Gastrocnemius medialis (tissue), 4 donors: ENCODE measurements at regions of chr12 and their contacts with region 1.

Region 1: DNA sequence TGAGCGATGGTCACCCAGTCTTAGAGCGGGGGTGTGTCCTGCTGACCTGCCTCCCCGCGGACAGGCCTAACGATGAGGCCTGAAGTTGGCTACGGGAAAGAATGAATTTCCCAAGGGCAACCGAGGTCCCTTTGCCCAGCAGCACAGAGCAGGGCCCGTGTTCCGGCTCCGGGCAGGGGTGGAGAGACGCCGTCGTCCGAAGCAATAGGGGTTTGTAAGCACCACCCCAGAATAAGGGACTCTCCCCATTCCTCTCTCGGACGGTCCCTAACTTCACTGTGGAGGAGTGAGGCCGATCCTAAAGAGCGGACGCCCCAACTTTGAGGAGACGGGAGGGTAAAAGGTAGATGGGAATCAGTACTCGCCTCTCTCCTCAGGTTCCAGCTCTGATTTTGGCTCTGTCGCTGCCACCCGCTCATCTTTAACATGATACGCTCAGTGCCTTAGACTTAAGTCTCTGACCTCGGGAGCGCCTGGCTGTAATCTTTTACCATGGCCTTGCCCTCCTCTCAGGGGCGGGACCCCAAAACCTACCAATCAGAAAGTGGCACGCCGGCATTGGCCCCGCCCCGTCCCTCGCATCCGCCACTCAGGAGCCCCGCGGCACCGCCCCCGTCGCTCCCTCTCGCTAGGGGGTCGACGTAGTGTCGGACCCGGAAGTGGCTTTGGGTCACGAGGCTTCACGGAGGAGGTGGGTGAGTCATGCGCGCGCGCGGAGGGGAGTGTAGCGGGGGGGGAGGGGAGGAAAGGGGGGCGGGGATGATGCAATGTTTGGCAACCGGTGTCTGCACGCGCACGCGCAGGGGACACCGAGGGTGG is at the start of gene DDIT3:
- DNase-seq: peak; percentile 99 to 100
- ATAC-seq: peak; percentile 59 to 70
- H3K4me3 ChIP-seq: peak within 1 kb of the TSS; percentile 79 to 87 (median 82)
- H3K27ac ChIP-seq: peak within 1 kb of the TSS; percentile 93 to 99 (median 96)
- H3K4me1 ChIP-seq: peaks cover 56 to 61% of the 10 kb centered on the region in 2 donors
- H3K27me3 ChIP-seq: no peaks in the 10 kb centered on the region
- CTCF ChIP-seq: no peak
- POLR2A ChIP-seq: peak; percentile 99
- total RNA-seq, gene DDIT3: 11.8 to 46.4 (median 17.1) TPM

Region 2: GRCh38 chr12:56338308-56339157 is 1181.7 kb before region 1 on chr12 and contains the start of gene IL23A:
- in situ Hi-C with region 1: no loop called
- intact Hi-C with region 1: no loop called
- DNase-seq: no peak
- ATAC-seq: no peak
- H3K4me3 ChIP-seq: no peak within 1 kb of the TSS
- H3K27ac ChIP-seq: no peak within 1 kb of the TSS
- H3K4me1 ChIP-seq: peaks cover 4 to 5% of the 10 kb centered on the region in 2 donors
- H3K27me3 ChIP-seq: no peaks in the 10 kb centered on the region
- CTCF ChIP-seq: no peak
- POLR2A ChIP-seq: no peak
- total RNA-seq, gene IL23A: not detected

Region 3: DNA sequence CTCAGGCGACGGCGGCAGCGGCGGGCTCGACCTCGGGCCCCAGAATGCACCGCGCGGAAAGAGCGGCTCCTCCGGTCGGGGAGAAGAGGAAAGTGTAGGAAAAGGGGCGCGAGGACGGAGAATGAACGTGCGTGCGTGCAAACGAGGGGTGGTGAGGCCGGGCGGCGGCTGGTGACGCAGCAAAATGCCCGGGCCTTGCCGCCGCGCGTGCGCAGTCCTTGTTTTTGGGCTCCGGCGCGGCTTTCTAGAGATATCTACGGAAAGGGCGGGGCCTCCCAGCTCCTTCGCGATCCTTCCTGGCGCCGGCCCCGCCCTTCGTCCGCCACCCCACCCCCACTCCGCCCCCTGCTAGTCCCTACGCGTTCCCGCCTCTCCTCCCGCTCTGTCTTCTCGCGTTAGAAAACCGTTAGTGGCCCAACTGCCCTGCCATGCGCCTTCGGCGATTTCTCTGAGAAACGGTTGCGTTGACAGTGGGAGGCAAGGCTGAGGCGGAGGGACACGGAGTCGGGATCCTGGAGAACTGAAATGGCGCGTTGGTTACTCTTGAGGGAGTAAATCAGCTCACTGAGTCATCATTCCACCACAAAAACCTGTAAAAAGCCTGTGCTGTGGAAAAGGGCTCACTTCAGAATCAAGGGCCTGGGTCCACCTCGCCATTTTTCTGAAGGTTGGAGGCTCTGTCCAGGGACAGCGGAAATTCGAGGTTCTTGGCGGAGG is 832.0 kb before region 1 on chr12 and contains the start of gene PTGES3:
- in situ Hi-C with region 1: no loop called
- intact Hi-C with region 1: loop called (anchors 5 kb)
- DNase-seq: peak; percentile 96 to 97
- ATAC-seq: peak; percentile 88 to 89
- H3K4me3 ChIP-seq: peak within 1 kb of the TSS; percentile 84 to 95 (median 90)
- H3K27ac ChIP-seq: peak within 1 kb of the TSS; percentile 97 to 99 (median 98)
- H3K4me1 ChIP-seq: peaks cover 33 to 41% of the 10 kb centered on the region in 2 donors
- H3K27me3 ChIP-seq: no peaks in the 10 kb centered on the region
- CTCF ChIP-seq: no peak
- POLR2A ChIP-seq: peak; percentile 96 to 97
- total RNA-seq, gene PTGES3: 57.2 to 81.4 (median 69.3) TPM

Region 4: DNA sequence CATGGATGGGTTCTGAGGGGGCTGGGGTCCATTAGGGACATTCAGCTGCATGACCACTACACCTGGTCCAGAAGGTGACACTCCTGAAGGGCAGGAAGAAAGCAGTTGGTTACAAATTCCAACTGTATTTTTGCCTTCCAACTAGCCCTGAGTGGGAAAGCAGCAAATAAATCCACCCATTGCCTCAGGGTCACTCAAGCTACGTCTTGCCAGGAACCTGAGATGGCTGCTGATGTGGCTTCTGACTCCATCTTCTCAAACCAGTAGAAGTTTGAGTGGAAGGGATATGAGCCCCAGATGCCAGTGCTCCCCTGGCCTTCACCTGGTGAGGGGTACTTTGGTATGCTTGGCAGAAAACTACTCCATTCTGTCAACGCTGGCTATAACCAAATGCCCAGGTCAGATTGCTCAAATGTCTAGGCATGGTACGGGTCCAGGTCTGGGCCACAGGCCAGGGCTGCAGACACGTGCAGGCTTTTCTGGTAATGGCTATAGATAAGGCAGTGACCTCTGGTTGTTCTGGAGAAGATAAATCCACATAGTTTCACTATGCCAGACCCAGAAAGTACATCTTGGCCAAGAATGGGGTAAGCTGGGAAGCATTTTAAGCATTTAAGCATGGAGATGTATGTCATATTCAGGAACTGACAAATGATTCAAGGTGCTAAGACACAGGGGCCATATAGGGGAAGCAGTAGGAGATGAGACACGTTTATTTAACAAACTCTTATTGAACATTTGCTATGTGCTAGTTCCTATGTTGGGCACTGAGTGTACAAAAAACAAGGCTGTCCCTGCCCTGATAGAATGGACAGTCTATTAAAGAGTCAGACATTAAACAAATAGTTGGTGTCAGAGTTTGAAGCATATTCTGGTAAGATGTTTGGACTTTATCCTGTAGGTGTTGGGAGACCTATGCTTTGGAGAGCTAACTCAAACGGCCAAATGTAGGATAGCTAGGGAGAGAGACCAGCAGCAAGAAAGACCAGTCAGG is 261.0 kb before region 1 on chr12:
- in situ Hi-C with region 1: no loop called
- intact Hi-C with region 1: loop called (anchors 5 kb)
- DNase-seq: peak in 1 of 2 donors; percentile 47
- ATAC-seq: no peak
- H3K4me3 ChIP-seq: no peak overlapping the region
- H3K27ac ChIP-seq: peak overlapping the region; percentile 82 to 85 (median 82)
- H3K4me1 ChIP-seq: peaks cover 59 to 71% of the 10 kb centered on the region in 2 donors
- H3K27me3 ChIP-seq: no peaks in the 10 kb centered on the region
- CTCF ChIP-seq: no peak
- POLR2A ChIP-seq: no peak

Region 5: DNA sequence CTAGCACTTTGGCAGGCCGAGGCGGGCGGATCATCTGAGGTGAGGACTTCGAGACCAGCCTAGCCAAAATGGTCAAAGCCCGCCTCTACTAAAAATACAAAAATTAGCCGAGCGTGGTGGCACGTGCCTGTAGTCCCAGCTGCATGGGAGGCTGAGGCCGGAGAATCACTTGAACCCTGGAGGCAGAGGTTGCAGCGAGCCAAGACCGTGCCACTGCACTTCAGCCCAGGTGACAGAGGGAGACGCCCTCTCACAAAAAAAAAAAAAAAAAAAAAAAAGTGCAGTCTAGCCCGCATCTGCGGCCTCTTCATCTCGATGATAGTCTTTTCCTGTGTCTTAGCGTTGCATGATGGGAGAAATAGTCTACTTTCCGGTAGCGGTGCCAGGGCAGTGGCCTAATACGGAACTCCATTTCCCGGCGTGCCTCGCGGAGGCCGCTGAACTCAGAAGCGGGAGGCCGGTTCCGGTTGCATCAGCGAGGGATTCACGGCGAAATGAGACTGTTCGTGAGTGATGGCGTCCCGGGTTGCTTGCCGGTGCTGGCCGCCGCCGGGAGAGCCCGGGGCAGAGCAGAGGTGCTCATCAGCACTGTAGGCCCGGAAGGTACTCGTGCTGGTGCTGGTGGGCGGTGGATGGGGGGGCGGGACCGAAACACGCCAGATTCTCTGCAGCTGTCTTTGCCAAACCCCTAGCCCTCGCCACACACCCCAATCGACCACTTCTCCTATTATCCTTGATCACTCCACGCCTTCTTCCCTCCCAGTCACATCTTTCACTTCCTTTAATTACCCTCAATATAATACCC is 32.5 kb before region 1 on chr12 and contains the start of gene MARS1:
- in situ Hi-C with region 1: no loop called
- intact Hi-C with region 1: loop called (anchors 1 kb)
- DNase-seq: peak; percentile 94 to 96
- ATAC-seq: peak; percentile 100
- H3K4me3 ChIP-seq: peak within 1 kb of the TSS; percentile 74 to 95 (median 76)
- H3K27ac ChIP-seq: peak within 1 kb of the TSS; percentile 83 to 86 (median 84)
- H3K4me1 ChIP-seq: peaks cover 10 to 13% of the 10 kb centered on the region in 2 donors
- H3K27me3 ChIP-seq: no peaks in the 10 kb centered on the region
- CTCF ChIP-seq: no peak
- POLR2A ChIP-seq: peak; percentile 47 to 73
- total RNA-seq, gene MARS1: 37.7 to 81.1 (median 42.0) TPM

Region 6: DNA sequence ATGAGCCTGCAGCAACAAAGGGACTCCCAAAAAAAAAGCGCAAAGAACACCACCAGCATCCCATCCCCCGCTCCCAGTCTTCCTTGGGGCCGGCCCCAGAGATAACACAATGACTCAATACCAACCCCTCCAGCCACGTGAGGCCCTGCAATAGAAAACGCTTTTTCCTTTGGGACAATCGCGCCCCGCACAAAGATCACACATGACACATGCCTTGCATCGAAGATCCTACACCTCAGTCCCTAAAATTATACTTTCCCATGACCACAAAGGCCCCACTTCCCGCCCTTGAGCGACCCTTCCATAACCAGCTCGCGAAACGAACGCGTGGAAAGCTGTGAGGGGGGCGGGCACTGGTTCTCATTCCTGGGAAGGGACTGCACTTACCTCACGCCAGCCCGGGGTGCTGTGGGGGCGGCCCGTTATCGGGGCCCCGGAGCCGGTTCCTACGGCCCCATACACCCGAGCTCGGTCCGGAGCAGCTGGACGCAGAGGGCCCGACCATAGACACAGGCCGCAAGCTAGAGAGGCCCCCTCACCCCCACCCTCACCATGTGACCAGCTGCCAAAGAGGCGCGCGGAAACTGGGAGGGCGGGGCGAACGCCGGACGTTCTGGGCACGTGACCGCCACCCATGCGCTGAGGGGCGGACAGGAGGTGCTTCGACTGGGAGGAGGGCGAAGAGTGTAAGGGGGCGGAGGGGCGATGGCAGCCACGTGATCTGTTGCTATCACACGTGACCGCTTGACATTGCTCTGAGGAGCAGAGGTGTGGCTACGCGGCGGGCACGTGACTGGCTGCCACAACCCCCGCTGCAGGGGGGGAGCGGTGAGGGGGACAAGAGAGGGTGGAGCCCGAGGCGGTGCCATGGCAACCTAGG is 231.8 kb after region 1 on chr12 and contains the start of gene CDK4:
- in situ Hi-C with region 1: no loop called
- intact Hi-C with region 1: loop called (anchors 2 kb)
- DNase-seq: peak; percentile 99 to 100
- ATAC-seq: peak; percentile 87 to 88
- H3K4me3 ChIP-seq: peak within 1 kb of the TSS; percentile 74 to 95 (median 80)
- H3K27ac ChIP-seq: peak within 1 kb of the TSS; percentile 94 to 98 (median 96)
- H3K4me1 ChIP-seq: peaks cover 23 to 27% of the 10 kb centered on the region in 2 donors
- H3K27me3 ChIP-seq: no peaks in the 10 kb centered on the region
- CTCF ChIP-seq: peak in 1 of 5 experiments; percentile 24
- POLR2A ChIP-seq: peak; percentile 85 to 90
- total RNA-seq, gene CDK4: 39.7 to 55.5 (median 47.4) TPM